ENCODE measurements at regions of chr12 and their contacts with region 1.

Region 1: GRCh38 chr12:49069507-49070346 is at the start of gene RHEBL1:
- DNase-seq: peak; percentile 99
- H3K4me3 ChIP-seq: peak within 1 kb of the TSS; percentile 67 to 75
- H3K27ac ChIP-seq: peak within 1 kb of the TSS; percentile 63 to 68
- H3K4me1 ChIP-seq: peaks cover 0 to 17% (median 12%) of the 10 kb centered on the region in 4 donors
- H3K27me3 ChIP-seq: no peaks in the 10 kb centered on the region
- CTCF ChIP-seq: no peak

Region 2: DNA sequence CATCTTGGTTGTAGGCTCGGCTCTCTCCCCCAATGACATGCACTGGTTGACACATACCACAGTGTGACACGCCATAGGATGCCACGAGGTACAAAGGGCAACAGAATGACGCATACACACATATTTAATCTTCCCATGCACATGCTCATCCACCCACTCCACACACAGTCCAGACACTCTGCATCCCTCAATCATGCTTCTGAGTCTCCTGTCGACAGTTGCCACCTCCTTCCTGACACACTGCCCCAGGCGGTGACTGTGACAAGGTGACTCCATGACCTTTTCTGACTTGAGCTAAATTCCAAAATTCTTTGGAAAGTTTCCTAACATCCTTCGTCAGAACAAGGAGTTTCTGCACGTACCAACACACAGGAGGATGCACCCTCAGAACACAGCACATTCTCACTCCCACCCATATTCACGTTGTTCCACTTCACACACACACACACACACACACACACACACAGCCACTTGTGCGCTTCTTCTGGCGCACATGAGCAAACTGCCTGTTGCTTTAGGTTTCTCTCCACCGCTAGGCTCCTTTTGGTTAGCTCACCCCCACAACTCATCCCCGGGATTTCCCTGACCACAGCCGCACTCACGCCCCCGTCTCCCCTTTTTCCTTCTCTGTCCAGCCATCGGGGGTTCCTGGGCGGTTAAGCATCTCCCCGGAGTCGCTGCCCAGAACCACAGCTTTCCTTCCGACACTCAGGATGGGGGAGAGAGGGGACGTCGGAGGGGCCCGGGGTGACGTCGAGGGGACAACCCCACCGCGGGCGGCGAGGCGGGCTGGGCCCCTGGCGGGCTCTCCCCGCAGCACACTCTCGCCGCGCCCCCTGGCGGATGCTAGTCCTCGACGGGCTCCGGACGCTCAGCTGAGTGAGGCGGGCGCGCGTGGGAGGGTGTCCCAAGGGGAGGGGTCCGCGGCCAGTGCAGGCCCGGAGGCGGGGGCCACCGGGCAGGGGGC is 92.1 kb before region 1 on chr12:
- intact Hi-C with region 1: no loop called
- DNase-seq: no peak
- H3K4me3 ChIP-seq: peak overlapping the region in 1 of 2 donors; percentile 35
- H3K27ac ChIP-seq: no peak overlapping the region
- H3K4me1 ChIP-seq: peaks cover 11 to 52% (median 45%) of the 10 kb centered on the region in 4 donors
- H3K27me3 ChIP-seq: peaks cover 13 to 100% of the 10 kb centered on the region in 2 donors
- CTCF ChIP-seq: peak; percentile 62 to 76

Region 3: DNA sequence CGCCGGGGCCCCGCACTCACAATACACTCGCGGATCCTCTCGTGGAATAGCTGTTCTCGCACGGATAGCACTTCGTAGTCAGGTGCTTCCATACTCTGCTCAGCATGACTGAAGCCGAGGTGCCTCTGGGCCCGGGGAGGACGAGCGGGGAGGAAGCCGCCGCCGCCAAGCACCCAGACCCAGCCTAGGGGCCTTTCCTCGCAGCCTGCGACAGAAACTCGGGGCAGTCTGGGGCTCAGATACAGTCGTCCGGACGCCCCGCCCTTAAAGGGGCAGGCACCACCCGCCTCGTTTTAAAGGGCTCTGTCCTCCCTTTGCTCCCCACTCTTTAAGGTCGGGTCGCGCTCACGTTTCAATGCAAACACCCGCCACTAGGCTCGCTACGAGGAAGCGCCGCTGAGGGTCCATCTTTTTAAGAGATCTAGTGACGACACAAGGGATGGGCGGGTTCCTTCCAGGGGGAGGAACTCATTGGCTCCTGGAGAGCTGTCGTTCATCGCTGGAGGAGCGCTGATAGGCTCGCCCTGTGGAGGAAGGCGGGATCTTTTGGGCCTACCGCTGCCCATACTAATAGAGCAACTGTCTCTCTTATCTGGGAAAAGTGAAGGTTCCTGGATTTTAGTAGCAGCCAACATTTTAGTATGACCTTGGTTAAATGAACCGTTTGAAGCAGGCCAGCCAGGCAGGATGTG is 40.9 kb after region 1 on chr12 and contains the start of gene LMBR1L:
- intact Hi-C with region 1: loop called (anchors 10 kb)
- DNase-seq: peak; percentile 98 to 99
- H3K4me3 ChIP-seq: peak within 1 kb of the TSS; percentile 93
- H3K27ac ChIP-seq: peak within 1 kb of the TSS; percentile 99
- H3K4me1 ChIP-seq: peaks cover 0 to 46% (median 36%) of the 10 kb centered on the region in 4 donors
- H3K27me3 ChIP-seq: no peaks in the 10 kb centered on the region
- CTCF ChIP-seq: peak; percentile 61 to 81

Measured in tibial artery (tissue), 4 donors.